ENCODE measurements at regions of chr11 and their contacts with region 1.

Region 1: GRCh38 chr11:12029738-12030363 is 21.4 kb upstream of the DKK3 start:
- DNase-seq: no peak
- H3K4me3 Mint-ChIP-seq: no peak overlapping the region
- H3K27ac Mint-ChIP-seq: no peak overlapping the region
- H3K4me1 Mint-ChIP-seq: peaks cover 15% of the 10 kb centered on the region
- H3K27me3 Mint-ChIP-seq: no peaks in the 10 kb centered on the region
- CTCF ChIP-seq: no peak

Region 2: DNA sequence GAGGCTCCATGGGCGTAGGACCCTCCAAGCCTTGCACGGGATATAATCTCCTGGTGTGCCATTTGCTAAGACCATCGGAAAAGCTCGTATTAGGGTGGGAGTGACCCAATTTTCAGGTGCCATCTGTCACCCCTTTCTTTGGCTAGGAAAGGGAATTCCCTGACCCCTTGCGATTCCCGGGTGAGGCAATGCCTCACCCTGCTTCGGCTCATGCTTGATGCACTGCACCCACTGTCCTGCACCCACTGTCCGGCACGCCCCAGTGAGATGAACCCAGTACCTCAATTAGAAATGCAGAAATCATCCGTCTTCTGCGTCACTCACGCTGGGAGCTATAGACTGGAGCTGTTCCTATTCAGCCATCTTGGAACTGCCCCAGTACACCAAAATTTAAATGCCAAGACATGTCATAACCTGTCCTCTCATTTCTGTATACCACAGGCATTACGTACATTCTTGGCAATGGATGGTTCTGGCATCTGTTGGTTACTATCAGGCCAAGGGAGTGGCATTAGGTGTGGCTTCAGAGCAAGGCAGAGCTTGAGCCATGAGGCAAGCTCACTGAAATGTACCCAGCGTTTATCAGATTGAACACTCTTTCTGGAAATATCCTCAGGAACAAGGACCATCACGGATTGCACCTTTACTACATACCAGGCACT is 312.7 kb before region 1 on chr11:
- CTCF ChIA-PET with region 1: no interaction called
- intact Hi-C with region 1: no loop called
- DNase-seq: no peak
- H3K4me3 Mint-ChIP-seq: no peak overlapping the region
- H3K27ac Mint-ChIP-seq: no peak overlapping the region
- H3K4me1 Mint-ChIP-seq: no peaks in the 10 kb centered on the region
- H3K27me3 Mint-ChIP-seq: peaks cover 54% of the 10 kb centered on the region
- CTCF ChIP-seq: no peak

Region 3: DNA sequence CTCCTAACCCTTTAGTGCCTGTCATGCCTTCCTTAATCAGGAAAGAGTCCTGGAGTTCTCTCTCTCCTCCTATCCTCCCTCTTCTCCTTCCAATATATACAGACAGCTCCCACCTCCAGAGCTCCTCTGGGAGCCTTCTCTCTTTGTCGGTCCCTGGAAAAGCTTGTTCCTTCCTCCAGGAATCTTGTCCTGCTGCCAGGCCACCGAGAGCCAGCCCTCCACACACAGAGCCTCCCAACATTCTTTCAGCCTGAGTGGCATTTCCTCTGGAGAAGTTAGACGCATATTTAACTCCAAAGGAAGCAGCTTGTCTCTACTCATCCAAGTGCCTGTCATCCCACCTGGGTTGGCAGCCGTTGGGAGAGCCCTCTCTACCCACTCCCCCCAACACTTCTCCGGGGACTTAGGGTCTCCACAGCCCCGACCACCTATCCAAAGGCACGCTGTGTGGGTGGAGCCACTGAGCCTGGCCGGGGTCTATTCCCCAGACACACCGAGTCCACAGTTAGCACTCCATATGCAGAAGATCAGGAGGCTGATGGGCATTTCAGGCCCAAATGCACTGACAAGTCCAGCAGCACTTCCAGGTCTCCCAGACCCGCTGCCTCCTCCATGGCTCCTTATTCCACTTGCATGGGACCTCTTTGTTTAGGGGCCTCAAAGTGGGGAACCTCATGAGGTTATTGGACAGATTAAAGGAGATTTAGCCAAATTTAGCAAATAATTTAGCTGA is 52.5 kb before region 1 on chr11:
- CTCF ChIA-PET with region 1: no interaction called
- intact Hi-C with region 1: loop called (anchors 10 kb)
- DNase-seq: no peak
- H3K4me3 Mint-ChIP-seq: no peak overlapping the region
- H3K27ac Mint-ChIP-seq: peak overlapping the region; percentile 3
- H3K4me1 Mint-ChIP-seq: peaks cover 30% of the 10 kb centered on the region
- H3K27me3 Mint-ChIP-seq: no peaks in the 10 kb centered on the region
- CTCF ChIP-seq: no peak

Region 4: GRCh38 chr11:12137938-12138731 is 108.3 kb after region 1 on chr11:
- CTCF ChIA-PET with region 1: no interaction called
- intact Hi-C with region 1: no loop called
- DNase-seq: no peak
- H3K4me3 Mint-ChIP-seq: no peak overlapping the region
- H3K27ac Mint-ChIP-seq: no peak overlapping the region
- H3K4me1 Mint-ChIP-seq: peaks cover 47% of the 10 kb centered on the region
- H3K27me3 Mint-ChIP-seq: no peaks in the 10 kb centered on the region
- CTCF ChIP-seq: no peak